Aorta (tissue), 5 donors: ENCODE measurements at regions of chr19 and their contacts with region 1.

Region 1: DNA sequence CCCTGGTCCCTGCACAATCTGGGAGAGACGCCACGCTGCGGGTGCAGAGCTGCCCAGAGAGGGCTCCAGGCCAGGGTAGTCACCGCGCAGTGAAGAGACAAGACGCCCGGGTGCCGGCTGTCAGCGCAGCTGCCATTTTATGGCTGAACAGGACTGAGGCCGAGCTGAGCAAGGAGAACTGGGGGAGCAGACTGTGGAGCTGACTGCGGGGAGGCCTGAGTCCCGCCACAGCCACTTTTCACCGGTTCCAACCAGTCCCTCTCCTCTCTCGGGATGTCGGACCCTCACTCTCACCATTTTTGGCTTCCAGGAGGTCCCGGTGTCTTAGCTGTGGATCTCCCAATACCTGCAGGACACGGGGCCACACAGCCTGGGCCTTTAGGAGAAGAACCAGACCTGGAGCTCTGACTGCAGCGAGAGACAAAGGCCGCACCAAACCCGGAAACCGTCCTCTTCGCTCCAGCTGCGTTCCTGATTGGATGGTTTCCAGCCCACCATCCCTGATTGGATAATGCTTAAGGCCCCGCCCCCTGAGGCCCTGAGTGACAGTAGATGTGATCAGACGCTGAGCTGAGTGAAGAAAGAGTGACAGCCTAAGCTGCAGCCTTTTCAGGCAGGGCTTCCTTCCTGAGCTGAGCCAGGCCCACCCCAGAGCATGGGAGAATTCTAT is at the start of gene ZNF626:
- DNase-seq: peak; percentile 96 to 97
- ATAC-seq: peak; percentile 97
- H3K4me3 ChIP-seq: peak within 1 kb of the TSS; percentile 14 to 97
- H3K27ac ChIP-seq: peak within 1 kb of the TSS; percentile 55 to 67
- H3K4me1 ChIP-seq: no peaks in the 10 kb centered on the region
- H3K27me3 ChIP-seq: no peaks in the 10 kb centered on the region
- total RNA-seq, gene ZNF626: 15.0 to 16.4 TPM

Region 2: GRCh38 chr19:20423381-20424197 is 237.7 kb before region 1 on chr19:
- intact Hi-C with region 1: loop called in 1 of 2 experiments (anchors 10 kb)
- DNase-seq: peak; percentile 70 to 86
- ATAC-seq: peak; percentile 82
- H3K4me3 ChIP-seq: peak overlapping the region; percentile 74 to 84
- H3K27ac ChIP-seq: peak overlapping the region; percentile 77 to 90
- H3K4me1 ChIP-seq: no peaks in the 10 kb centered on the region
- H3K27me3 ChIP-seq: no peaks in the 10 kb centered on the region

Region 3: DNA sequence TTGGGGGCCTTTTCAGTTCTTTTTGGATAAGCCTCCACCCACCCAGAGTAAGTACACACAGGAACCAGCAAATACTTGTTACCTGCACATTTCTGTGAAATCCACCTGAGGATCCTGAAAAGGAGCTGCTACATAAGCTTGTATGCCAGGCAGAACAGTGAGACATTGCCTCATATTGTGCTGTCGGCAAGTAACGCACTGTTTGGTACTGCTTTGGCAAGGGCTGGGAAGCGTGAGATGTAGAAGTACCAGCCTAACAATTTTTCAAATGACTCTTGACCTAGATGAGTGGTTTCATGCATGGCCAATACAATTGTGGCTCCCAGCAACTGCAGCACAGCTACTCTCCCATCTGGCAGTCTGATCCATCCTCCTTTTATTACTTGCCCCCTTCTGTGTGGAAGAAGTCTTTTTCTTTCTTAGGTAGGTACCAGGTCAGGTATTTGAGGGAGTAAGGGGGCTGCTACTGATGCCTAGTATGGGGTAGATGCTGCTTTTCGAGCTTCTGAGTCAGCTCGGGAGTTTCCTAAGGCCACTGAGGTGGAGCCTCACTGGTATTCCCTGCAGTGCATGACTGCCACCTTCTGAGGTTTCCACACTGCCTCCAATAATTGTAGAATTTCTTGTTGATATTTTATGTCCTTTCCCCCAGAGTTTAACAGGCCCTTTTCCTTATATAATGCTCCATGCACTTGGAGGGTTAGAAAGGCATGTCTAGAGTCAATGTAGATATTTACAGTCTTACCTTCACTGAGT is 147.9 kb before region 1 on chr19:
- intact Hi-C with region 1: no loop called
- DNase-seq: no peak
- ATAC-seq: no peak
- H3K4me3 ChIP-seq: no peak overlapping the region
- H3K27ac ChIP-seq: no peak overlapping the region
- H3K4me1 ChIP-seq: no peaks in the 10 kb centered on the region
- H3K27me3 ChIP-seq: peaks cover 0 to 2% of the 10 kb centered on the region in 2 donors

Region 4: DNA sequence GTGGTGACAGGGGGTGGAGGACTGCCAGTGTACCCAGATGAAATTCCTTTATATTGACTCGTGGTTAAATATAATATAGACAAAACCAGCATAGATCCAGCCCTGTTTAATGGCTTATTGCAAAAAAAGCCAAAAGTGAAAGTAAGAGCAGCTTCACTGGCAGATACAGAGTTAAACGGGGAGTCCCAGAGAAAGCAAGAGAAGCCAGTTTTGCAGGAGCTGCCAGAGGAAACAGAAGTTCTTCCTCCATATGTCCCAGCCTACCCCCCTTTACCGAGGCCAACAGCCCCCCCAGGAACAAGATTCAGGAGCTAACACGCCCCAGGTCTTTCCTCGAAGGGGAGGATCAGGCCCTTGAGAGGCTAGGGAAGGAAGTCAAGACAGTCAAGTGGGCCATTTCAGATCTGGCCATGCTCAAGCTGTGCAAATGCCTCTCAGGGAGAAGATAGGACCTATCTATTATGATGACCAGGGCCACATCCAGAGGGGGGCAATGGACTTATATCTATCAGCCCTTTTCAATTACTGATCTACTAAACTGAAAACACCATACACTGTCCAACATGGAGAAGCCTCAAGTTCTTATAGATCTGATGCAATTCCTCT is 48.5 kb before region 1 on chr19:
- intact Hi-C with region 1: no loop called
- DNase-seq: no peak
- ATAC-seq: peak; percentile 29
- H3K4me3 ChIP-seq: peak overlapping the region; percentile 57 to 89
- H3K27ac ChIP-seq: peak overlapping the region in 1 of 2 donors; percentile 50
- H3K4me1 ChIP-seq: no peaks in the 10 kb centered on the region
- H3K27me3 ChIP-seq: no peaks in the 10 kb centered on the region

Region 5: GRCh38 chr19:20776083-20777076 is 115.1 kb after region 1 on chr19 and contains the start of gene ZNF66:
- intact Hi-C with region 1: loop called (anchors 5 to 10 kb)
- DNase-seq: peak; percentile 97 to 98
- ATAC-seq: peak; percentile 98
- H3K4me3 ChIP-seq: peak within 1 kb of the TSS; percentile 5 to 63
- H3K27ac ChIP-seq: peak within 1 kb of the TSS in 1 of 2 donors; percentile 25
- H3K4me1 ChIP-seq: no peaks in the 10 kb centered on the region
- H3K27me3 ChIP-seq: no peaks in the 10 kb centered on the region
- total RNA-seq, gene ZNF66: 3.7 to 7.7 TPM

Region 6: DNA sequence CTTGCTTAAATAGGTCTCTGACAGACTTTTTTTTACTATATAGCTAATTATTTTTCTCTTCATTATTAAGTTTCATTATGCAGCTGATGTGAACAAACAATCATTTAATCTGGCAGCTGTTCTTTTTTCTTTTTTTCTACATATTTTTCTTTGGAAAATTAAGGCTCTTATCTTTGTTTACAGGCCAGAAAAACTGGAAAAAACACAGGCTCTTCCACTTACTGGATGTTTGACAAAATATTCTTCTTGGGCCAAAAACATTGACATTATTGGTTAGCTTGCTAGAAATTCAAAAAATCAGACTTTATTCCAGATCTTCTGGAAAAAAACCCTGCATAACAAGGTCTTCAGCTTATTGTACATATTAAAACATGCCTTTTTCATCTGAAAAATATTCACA is 130.5 kb after region 1 on chr19:
- intact Hi-C with region 1: no loop called
- DNase-seq: no peak
- ATAC-seq: no peak
- H3K4me3 ChIP-seq: no peak overlapping the region
- H3K27ac ChIP-seq: no peak overlapping the region
- H3K4me1 ChIP-seq: no peaks in the 10 kb centered on the region
- H3K27me3 ChIP-seq: no peaks in the 10 kb centered on the region